Activated naive CD4-positive, alpha-beta T cell treated with anti-CD3 and anti-CD28 coated beads for 36 hours (primary cell): ENCODE measurements at regions of chr19 and their contacts with region 1.

Region 1: DNA sequence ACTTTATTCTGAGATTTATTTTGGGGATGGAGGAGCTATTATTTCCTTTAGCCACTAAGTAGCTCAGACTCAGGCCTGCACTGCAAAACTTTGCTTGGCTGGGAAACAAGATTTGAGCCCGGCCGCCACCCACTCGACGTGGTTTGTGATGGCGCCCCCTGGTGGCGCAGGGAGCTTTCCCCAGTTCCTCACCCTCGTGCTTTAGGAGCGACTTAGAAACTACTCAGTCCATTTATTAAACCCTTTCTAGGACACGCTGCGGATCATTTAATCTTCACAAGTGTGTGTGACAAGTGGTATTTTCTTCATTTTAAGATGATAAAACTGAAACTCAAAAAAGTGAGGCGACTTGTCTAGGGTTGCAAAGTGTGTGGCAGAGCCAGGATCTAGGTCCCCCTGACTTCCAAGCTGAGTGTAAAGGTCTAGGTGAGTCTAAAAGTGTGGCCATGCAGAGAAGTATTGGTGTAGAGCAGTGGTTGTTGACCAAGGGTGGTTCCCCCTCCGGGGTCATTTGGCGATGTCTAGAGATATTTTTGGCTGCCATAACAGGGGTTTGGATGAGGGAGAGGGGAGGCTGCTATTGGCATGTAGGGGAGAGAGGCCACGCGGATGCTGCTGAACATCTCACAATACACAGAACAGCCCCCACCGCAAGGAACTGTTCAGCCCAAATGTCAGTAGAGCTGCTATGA is 2.2 kb downstream of the CXCL17 start:
- DNase-seq: peak; percentile 88
- H3K4me3 Mint-ChIP-seq: peak overlapping the region; percentile 3
- H3K27ac Mint-ChIP-seq: no peak overlapping the region
- H3K4me1 Mint-ChIP-seq: peaks cover 14% of the 10 kb centered on the region
- H3K27me3 Mint-ChIP-seq: no peaks in the 10 kb centered on the region

Region 2: DNA sequence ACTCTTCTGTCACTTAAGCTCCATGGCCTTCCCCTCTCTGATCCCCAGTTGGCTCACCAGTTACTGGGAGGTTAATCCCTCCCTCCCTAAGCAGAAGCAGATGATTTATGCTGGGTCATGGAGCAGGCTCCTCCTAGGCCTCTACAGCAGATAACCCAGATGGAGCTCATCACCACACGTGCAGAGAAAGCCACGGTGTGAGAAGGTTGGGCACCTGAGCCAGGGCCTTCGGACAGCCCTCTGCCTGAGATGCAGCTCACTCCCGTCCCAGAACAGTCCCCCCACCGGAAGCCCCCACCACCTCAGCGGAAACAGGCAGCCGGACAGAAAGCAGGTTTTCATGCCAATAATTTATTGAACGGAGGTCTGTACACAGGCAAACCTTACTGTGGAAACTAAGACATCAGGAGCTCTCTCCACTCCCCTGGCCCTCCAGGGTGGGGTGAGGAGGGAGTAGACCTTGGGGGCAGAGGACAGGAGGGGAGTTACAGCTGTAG is 210.6 kb before region 1 on chr19:
- CTCF ChIA-PET with region 1: no interaction called
- intact Hi-C with region 1: no loop called
- DNase-seq: no peak
- H3K4me3 Mint-ChIP-seq: no peak overlapping the region
- H3K27ac Mint-ChIP-seq: peak overlapping the region; percentile 34
- H3K4me1 Mint-ChIP-seq: peaks cover 31% of the 10 kb centered on the region
- H3K27me3 Mint-ChIP-seq: no peaks in the 10 kb centered on the region

Region 3: DNA sequence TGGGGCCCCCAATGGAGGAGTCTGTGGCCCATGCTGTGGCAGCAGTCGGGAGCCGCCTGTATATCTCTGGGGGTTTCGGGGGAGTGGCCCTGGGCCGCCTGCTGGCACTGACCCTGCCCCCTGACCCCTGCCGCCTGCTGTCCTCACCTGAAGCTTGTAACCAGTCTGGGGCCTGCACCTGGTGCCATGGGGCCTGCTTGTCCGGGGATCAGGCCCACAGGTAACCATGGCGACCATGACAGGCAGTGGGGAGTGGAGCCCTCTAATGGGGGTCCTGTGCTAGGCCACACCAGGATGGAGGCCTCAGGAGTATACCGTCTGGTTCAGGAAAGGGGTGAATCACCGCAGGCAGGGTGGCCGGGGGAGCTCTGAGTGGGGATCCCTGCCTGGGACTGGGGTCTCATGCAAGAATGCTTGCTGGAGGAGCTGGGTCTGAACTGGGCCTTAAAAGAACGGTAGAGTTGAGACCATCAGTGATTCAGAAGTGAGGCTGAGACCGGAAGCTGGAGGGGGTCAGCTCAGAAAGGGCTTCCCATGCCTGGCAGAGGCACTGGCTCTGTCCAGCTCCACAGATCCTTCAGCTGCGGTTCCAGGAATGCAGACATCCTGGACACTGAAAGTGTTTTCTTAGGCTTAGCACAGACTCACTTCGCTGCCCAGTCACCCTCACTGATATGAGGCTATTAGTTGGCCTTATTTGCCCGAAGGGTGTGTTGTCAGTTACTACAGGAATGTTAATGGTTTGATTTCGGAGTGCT is 79.5 kb before region 1 on chr19:
- CTCF ChIA-PET with region 1: no interaction called
- intact Hi-C with region 1: no loop called
- DNase-seq: no peak
- H3K4me3 Mint-ChIP-seq: no peak overlapping the region
- H3K27ac Mint-ChIP-seq: no peak overlapping the region
- H3K4me1 Mint-ChIP-seq: no peaks in the 10 kb centered on the region
- H3K27me3 Mint-ChIP-seq: no peaks in the 10 kb centered on the region

Region 4: GRCh38 chr19:42401365-42402303 is 38.9 kb before region 1 on chr19:
- CTCF ChIA-PET with region 1: interaction called, 10 read pairs
- intact Hi-C with region 1: no loop called
- DNase-seq: peak; percentile 82
- H3K4me3 Mint-ChIP-seq: peak overlapping the region; percentile 71
- H3K27ac Mint-ChIP-seq: no peak overlapping the region
- H3K4me1 Mint-ChIP-seq: peaks cover 33% of the 10 kb centered on the region
- H3K27me3 Mint-ChIP-seq: no peaks in the 10 kb centered on the region

Region 5: GRCh38 chr19:42455621-42456081 is 15.1 kb after region 1 on chr19:
- CTCF ChIA-PET with region 1: interaction called, 56 read pairs
- intact Hi-C with region 1: no loop called
- DNase-seq: no peak
- H3K4me3 Mint-ChIP-seq: no peak overlapping the region
- H3K27ac Mint-ChIP-seq: no peak overlapping the region
- H3K4me1 Mint-ChIP-seq: no peaks in the 10 kb centered on the region
- H3K27me3 Mint-ChIP-seq: no peaks in the 10 kb centered on the region

Region 6: GRCh38 chr19:42465827-42466280 is 25.4 kb after region 1 on chr19:
- CTCF ChIA-PET with region 1: interaction called, 10 read pairs
- intact Hi-C with region 1: no loop called
- DNase-seq: no peak
- H3K4me3 Mint-ChIP-seq: no peak overlapping the region
- H3K27ac Mint-ChIP-seq: no peak overlapping the region
- H3K4me1 Mint-ChIP-seq: peaks cover 14% of the 10 kb centered on the region
- H3K27me3 Mint-ChIP-seq: no peaks in the 10 kb centered on the region

Region 7: GRCh38 chr19:42529248-42529764 is 88.8 kb after region 1 on chr19:
- CTCF ChIA-PET with region 1: interaction called, 59 read pairs
- intact Hi-C with region 1: loop called (anchors 1 kb)
- DNase-seq: peak; percentile 85
- H3K4me3 Mint-ChIP-seq: peak overlapping the region; percentile 75
- H3K27ac Mint-ChIP-seq: peak overlapping the region; percentile 82
- H3K4me1 Mint-ChIP-seq: peaks cover 25% of the 10 kb centered on the region
- H3K27me3 Mint-ChIP-seq: no peaks in the 10 kb centered on the region